Right ventricle myocardium superior (tissue), 1 donor: ENCODE measurements at regions of chr20 and their contacts with region 1.

Region 1: DNA sequence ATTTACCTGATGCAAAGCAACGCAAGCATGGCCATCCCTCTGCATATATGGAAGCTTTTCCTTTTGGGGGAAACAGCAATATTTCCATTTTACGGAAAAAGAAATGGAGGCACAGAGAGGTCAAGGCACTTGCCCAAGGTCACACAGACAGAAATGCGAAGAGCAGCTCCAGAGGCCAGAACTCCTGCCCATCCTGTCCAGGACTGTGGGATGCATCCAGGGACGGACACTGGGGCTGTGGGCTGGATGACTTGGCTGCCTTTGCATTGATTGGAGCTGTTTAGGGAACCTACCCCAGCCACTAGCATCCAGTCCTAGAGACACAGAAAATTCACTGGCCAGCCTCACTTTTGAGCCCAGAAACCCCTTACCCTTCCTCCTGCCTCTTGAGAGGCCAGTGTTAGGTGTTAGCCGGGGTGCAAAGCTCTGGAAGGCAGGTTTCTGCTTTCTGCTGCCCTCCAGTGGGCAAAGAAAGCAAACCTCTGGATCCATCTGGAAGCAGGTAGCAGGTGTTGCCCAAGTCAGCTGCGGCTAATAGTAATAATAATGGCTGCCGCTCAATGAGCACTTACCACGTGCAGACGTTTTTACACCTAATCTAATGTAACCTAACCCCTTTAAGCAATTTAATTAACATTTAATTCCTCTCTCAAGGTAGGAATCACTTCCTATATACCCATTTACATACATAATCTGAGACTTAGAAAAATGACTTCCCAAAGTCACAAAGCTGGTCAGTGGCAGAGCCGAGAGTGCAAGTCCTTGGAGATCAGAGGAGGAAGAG is 31.7 kb upstream of the CCN5 start:
- DNase-seq: no peak
- ATAC-seq: peak; percentile 79

Region 2: GRCh38 chr20:44050925-44051660 is 632.4 kb before region 1 on chr20:
- intact Hi-C with region 1: no loop called
- DNase-seq: no peak
- ATAC-seq: no peak

Region 3: GRCh38 chr20:44642203-44643153 is 41.0 kb before region 1 on chr20:
- intact Hi-C with region 1: no loop called
- DNase-seq: peak; percentile 86
- ATAC-seq: peak; percentile 71

Region 4: DNA sequence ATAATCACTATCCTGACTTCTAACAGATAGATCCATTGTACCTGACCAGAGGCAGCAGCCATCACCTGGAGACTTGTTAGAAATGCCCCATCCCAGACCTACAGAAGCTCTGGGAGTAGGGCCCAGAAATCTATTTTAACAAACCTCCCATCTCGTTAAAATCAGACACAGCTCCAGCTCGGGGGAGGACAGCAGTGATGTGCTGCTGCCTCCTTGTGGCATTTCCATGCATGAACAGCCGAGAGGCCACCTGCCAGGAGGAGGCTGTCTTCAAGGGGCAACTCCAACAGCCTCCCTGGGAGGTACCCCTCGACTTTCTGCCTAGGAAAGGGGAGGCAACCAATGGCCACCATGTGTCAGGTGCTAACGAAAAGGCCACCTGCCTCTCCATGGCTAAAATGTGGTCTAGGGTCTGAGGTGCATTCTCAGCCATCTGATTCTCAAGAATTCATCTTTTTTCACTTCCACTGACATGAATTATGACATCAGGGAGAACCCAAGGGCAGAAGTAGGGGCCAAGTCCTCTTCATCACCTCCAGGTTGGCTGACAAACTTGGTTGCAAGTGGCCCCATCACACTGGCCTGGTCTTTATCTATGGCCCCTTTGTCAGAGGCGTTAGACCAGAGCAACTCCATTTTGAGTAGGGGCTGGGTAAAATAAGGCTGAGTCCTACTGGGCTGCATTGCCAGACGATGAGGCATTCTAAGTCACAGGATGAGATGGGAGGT is 50.0 kb after region 1 on chr20:
- intact Hi-C with region 1: loop called (anchors 1 kb)
- DNase-seq: peak; percentile 76
- ATAC-seq: peak; percentile 59

Region 5: DNA sequence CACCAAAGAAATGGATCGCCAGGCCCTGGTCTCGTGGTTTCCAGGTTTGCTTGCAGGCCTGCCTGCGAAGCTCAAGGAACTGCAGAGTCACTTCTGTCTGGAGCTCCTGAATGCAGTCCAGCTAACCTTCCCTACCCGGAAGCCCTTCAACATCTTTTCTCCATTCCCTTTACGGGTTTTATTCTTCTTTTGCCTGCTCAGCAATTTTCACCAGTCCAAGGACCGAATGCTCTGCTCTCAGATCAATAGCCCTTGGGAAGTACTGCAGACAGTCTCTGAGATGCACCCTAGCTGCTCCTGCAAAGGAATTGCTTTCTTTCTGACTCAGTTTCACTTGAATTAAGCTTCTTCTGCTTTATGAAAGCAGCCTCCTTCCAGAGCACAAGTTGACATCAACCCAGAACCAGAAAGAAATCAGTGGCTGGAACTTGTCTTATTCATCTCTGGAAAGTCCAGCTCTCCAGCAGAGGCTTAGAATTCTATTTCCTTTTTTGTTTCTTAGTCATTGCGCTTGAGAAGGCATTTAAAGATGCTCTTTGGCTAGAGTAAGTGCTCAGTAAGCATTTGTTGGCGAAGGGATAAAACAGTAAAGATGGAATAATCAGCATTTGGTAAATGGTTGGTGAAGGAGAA is 183.4 kb after region 1 on chr20:
- intact Hi-C with region 1: loop called (anchors 5 kb)
- DNase-seq: no peak
- ATAC-seq: no peak